HCT116 (cell line): ENCODE measurements at regions of chr3 and their contacts with region 1.

Region 1: DNA sequence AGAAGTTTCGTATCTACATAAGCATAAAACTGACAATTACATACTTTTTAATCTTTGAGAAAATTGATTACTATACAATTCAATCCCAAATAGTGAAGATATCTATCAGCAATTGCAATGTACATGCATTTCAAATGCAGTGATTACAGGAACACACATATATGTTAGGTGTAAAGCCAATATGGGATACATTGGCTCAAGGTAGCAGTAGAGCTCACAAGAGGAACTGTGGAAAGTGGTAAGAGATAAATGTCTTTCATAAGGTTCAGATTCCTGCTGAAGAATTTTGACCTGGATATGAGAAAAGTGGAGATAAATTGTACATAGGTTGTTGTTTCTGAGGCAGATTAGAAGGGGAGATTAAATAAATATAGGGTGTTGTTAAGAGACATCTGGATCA is 1280.5 kb downstream of the OTOL1 start:
- DNase-seq: no peak
- ATAC-seq: no peak; the same call in 1 of the 2 replicates
- H3K4me3 ChIP-seq: no peak overlapping the region
- H3K27ac ChIP-seq: no peak overlapping the region
- H3K4me1 ChIP-seq: no peaks in the 10 kb centered on the region
- H3K27me3 ChIP-seq: no peaks in the 10 kb centered on the region
- CTCF ChIP-seq: peak in 2 of 3 experiments; percentile 25 to 39; a peak in 2 of 6 replicates
- POLR2A ChIP-seq: no peak
- RAD21 ChIP-seq: peak; percentile 46

Region 2: GRCh38 chr3:163043074-163043473 is 266.0 kb after region 1 on chr3:
- CTCF ChIA-PET with region 1: no interaction called
- POLR2A ChIA-PET with region 1: no interaction called
- RAD21 ChIA-PET with region 1: no interaction called
- intact Hi-C with region 1: loop called (anchors 2 kb)
- DNase-seq: peak; percentile 18
- ATAC-seq: peak; percentile 81
- H3K4me3 ChIP-seq: no peak overlapping the region
- H3K27ac ChIP-seq: no peak overlapping the region
- H3K4me1 ChIP-seq: no peaks in the 10 kb centered on the region
- H3K27me3 ChIP-seq: no peaks in the 10 kb centered on the region
- CTCF ChIP-seq: peak; percentile 41 to 53 (median 43); a peak in 5 of 6 replicates
- POLR2A ChIP-seq: no peak
- RAD21 ChIP-seq: peak; percentile 63

Region 3: DNA sequence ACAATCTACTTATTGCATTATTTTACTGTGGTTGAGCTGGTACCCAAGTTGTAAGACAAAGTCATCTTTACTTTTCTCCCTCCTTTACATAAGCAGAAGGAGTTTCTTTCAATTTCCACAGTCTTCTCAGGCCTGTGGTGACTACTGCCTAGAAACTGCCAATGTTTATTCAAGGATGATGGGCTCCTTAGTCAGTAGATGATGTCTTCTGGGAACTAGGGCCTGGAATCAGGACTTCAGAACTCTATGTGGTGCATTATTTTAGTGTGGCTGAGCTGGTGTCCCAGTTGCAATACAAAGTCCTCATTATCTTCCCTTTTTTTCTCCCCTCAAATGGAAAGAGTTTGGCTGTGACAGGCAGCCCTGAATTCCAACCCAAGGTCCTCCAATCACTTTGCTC is 538.7 kb after region 1 on chr3:
- CTCF ChIA-PET with region 1: no interaction called
- POLR2A ChIA-PET with region 1: no interaction called
- RAD21 ChIA-PET with region 1: no interaction called
- intact Hi-C with region 1: no loop called
- DNase-seq: no peak
- ATAC-seq: no peak
- H3K4me3 ChIP-seq: no peak overlapping the region
- H3K27ac ChIP-seq: no peak overlapping the region
- H3K4me1 ChIP-seq: no peaks in the 10 kb centered on the region
- H3K27me3 ChIP-seq: no peaks in the 10 kb centered on the region
- CTCF ChIP-seq: no peak
- POLR2A ChIP-seq: no peak
- RAD21 ChIP-seq: no peak